ENCODE measurements at regions of chr2 and their contacts with region 1.

Region 1: DNA sequence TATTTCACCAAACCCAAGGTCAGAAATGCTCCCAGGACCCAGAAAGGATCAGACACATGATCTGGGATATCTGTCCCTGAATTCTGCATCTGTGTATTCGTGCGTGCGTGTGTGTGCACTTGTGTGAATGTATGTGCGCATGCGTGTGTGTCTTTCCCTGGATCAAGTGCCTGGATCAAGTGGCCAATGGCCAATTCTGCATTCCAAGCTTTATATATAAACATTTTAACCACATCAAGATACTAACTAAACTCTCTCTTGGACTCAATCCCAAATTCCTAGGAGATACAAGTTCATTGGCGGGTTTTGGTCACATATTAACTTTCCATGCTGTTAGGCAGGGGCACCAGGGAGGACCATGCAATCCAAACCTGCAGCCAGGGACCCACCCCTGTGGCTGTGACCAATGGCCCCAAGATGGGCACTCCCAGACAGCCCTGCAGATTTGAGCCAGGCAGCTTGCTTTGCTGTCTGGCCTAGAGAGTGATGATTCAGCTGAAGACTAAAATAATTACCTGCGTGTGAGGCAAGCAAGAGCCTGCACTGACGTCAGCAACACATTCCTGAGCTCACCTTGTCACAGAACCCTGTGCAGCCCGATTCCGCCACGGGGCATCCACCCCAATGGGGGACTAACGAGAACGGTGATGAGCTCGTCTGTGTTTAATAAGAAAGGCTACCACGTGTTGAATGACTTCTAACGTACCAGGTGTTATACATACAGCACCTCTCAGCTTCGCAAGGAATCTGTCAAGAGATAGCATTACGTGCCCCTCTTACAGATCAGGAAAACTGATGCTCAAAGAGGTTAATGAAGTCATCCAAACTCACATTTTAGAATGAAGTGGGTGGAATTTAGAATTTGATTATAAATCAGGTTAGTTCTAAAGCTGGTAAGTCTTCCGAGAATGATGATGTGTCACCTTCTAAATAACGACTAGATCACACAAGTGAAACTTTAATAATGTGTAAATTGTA is 45.4 kb upstream of the ROCK2 start:
- DNase-seq: no peak
- H3K4me3 ChIP-seq: no peak overlapping the region
- H3K27ac ChIP-seq: peak overlapping the region; percentile 20 to 45
- H3K4me1 ChIP-seq: peaks cover 7 to 33% of the 10 kb centered on the region in 2 donors
- H3K27me3 ChIP-seq: no peaks in the 10 kb centered on the region
- CTCF ChIP-seq: no peak

Region 2: GRCh38 chr2:11377928-11378545 is 11.8 kb before region 1 on chr2:
- intact Hi-C with region 1: loop called (anchors 2 kb)
- DNase-seq: peak in 1 of 2 donors; percentile 79
- H3K4me3 ChIP-seq: peak overlapping the region; percentile 13 to 50
- H3K27ac ChIP-seq: peak overlapping the region; percentile 91 to 93
- H3K4me1 ChIP-seq: peaks cover 18 to 46% of the 10 kb centered on the region in 2 donors
- H3K27me3 ChIP-seq: no peaks in the 10 kb centered on the region
- CTCF ChIP-seq: no peak

Region 3: DNA sequence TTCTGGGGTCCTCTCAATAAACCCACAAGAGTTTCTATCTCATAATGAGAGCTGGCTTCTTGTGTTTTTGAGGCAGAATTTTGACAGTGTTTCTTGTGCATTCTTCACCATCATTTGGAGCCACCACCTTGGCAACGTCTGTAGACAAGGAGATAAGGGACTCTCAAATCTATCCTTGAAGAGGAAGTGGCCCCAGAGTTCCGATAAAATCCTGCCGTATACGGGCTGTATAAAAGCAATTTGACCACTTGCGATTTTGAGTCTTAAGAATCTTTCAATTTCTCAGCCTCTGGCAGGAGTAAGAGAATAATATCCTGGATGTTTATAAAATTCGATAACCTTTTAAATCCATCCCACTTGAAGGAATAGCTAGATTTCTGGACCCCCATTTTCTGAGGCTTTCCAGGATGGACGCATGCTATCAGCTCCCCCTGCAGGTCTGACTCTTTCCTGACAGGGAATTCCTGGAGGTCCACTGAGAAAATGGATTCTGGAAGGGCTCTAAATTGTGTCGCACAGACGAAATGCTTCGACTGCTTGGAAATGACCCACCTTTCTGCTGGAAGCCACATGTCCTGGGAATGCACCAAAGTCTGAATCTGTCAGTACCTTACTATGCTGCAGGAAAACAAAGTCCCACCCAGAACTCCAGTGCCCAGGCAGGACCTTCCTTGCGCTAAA is 22.1 kb after region 1 on chr2:
- intact Hi-C with region 1: loop called (anchors 2 kb)
- DNase-seq: peak in 1 of 2 donors; percentile 79
- H3K4me3 ChIP-seq: peak overlapping the region; percentile 44 to 59
- H3K27ac ChIP-seq: no peak overlapping the region
- H3K4me1 ChIP-seq: peaks cover 4 to 16% of the 10 kb centered on the region in 2 donors
- H3K27me3 ChIP-seq: no peaks in the 10 kb centered on the region
- CTCF ChIP-seq: peak; percentile 62 to 96 (median 83)

Region 4: GRCh38 chr2:11446733-11447248 is 57.0 kb after region 1 on chr2:
- intact Hi-C with region 1: no loop called
- DNase-seq: peak in 1 of 2 donors; percentile 77
- H3K4me3 ChIP-seq: no peak overlapping the region
- H3K27ac ChIP-seq: no peak overlapping the region
- H3K4me1 ChIP-seq: no peaks in the 10 kb centered on the region
- H3K27me3 ChIP-seq: no peaks in the 10 kb centered on the region
- CTCF ChIP-seq: peak; percentile 63 to 84 (median 64)